ENCODE measurements at regions of chr13 and their contacts with region 1.

Region 1: GRCh38 chr13:113452942-113453901 is at the start of gene ADPRHL1:
- DNase-seq: no peak
- ATAC-seq: no peak
- H3K4me3 Mint-ChIP-seq: no peak within 1 kb of the TSS
- H3K27ac Mint-ChIP-seq: no peak within 1 kb of the TSS
- H3K4me1 Mint-ChIP-seq: peaks cover 7% of the 10 kb centered on the region
- H3K27me3 Mint-ChIP-seq: no peaks in the 10 kb centered on the region
- CTCF ChIP-seq: no peak
- total RNA-seq, gene ADPRHL1: 0.84 and 0.93 TPM in 2 replicates

Region 2: GRCh38 chr13:113275387-113275786 is 177.8 kb before region 1 on chr13:
- CTCF ChIA-PET with region 1: no interaction called
- POLR2A ChIA-PET with region 1: no interaction called
- intact Hi-C with region 1: loop called (anchors 1 kb)
- DNase-seq: no peak
- ATAC-seq: peak; percentile 40
- H3K4me3 Mint-ChIP-seq: no peak overlapping the region
- H3K27ac Mint-ChIP-seq: no peak overlapping the region
- H3K4me1 Mint-ChIP-seq: no peaks in the 10 kb centered on the region
- H3K27me3 Mint-ChIP-seq: peaks cover 2% of the 10 kb centered on the region
- CTCF ChIP-seq: no peak

Measured in activated B cell treated with CpG ODN at 0.5 μM for 24 hours (primary cell).